ENCODE measurements at regions of chr3 and their contacts with region 1.

Region 1: GRCh38 chr3:73805435-73805834 is 180.7 kb upstream of the PDZRN3 start:
- DNase-seq: peak; percentile 54 to 91
- H3K4me3 ChIP-seq: no peak overlapping the region
- H3K27ac ChIP-seq: peak overlapping the region; percentile 83 to 89
- H3K4me1 ChIP-seq: peaks cover 0 to 23% of the 10 kb centered on the region in 2 donors
- H3K27me3 ChIP-seq: no peaks in the 10 kb centered on the region
- CTCF ChIP-seq: no peak

Region 2: GRCh38 chr3:73786321-73786807 is 19.1 kb before region 1 on chr3:
- intact Hi-C with region 1: loop called (anchors 2 kb)
- DNase-seq: peak; percentile 63 to 93
- H3K4me3 ChIP-seq: no peak overlapping the region
- H3K27ac ChIP-seq: peak overlapping the region; percentile 69 to 76
- H3K4me1 ChIP-seq: peaks cover 0 to 21% of the 10 kb centered on the region in 2 donors
- H3K27me3 ChIP-seq: no peaks in the 10 kb centered on the region
- CTCF ChIP-seq: no peak

Region 3: DNA sequence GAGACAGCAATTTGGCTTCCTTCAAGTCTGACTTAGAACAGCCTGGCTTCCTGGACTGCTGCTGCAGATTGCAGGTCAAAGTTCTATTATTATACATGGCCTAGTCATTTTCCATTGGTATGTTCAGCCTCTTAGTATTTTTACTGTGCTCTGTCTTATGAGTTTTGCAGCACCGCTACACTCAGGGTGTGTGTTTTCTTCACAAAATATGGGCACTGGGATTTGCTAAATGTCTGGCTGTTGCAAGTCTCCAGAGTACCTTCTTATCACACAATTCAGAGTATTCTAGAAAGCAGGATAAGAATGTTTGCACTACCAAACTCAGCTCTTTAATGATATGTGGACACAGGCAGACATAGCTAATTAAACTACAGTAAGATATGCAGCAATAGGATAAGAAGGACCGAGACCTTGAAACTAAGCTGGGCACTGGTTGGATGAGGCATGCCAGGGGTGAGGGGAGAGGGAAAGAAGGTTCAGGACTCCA is 22.3 kb after region 1 on chr3:
- intact Hi-C with region 1: loop called (anchors 1 kb)
- DNase-seq: peak in 1 of 2 donors; percentile 73
- H3K4me3 ChIP-seq: no peak overlapping the region
- H3K27ac ChIP-seq: peak overlapping the region; percentile 87 to 90
- H3K4me1 ChIP-seq: peaks cover 5 to 32% of the 10 kb centered on the region in 2 donors
- H3K27me3 ChIP-seq: no peaks in the 10 kb centered on the region
- CTCF ChIP-seq: no peak

Measured in ascending aorta (tissue), 2 donors.